A549 (cell line): ENCODE measurements at regions of chr10 and their contacts with region 1.

Region 1: DNA sequence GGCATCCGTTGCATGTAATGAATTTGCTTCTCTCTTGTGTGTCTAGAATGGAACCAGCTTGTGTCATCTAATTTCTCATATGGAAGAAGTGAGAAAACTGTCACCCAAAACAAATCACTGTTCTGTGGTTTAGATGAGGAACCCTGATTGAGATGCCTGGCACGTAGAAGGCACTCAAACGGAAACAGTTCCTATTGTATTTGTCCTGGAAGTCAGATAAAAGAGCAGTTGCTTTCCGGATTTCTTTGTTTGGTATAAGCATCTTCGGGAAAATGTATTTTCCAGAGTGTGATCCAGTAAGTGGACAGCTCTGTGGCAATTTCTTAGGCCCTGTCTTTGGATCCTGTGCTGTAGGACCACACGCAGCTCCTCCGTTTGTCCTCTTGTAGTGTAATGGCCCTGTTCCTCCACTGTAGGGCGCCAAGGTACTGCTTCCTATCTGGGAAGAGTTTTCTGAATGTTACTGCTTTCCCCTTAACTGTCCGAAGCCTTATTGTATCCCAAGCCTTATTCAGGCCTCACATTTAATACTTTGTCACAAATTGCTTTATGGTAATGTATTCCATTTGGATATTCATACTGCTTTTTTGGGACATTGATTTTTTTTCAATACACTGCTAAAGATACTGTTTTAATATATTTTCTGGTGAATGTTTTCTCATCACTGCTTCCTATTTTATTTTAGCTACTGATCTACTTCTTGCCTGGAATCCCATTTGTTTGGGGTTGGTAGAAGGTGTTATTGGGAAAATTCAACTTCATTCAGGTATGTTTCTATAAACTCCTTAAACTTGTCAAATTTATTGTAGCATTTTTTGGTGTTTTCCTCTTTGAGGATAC is 24.8 kb downstream of the INPP5F start:
- DNase-seq: peak; percentile 54 to 80
- ATAC-seq: peak; percentile 97 to 99
- H3K4me3 ChIP-seq: no peak overlapping the region
- H3K27ac ChIP-seq: no peak overlapping the region
- H3K4me1 ChIP-seq: peaks cover 8% of the 10 kb centered on the region
- CTCF ChIP-seq: peak; percentile 88
- EP300 ChIP-seq: no peak
- POLR2A ChIP-seq: no peak
- RAD21 ChIP-seq: peak; percentile 91 to 96

Region 2: GRCh38 chr10:119686439-119687191 is 64.0 kb before region 1 on chr10:
- CTCF ChIA-PET with region 1: interaction called, 18 read pairs
- POLR2A ChIA-PET with region 1: no interaction called
- DNase-seq: peak; percentile 81
- ATAC-seq: peak; percentile 82 to 90
- H3K4me3 ChIP-seq: no peak overlapping the region
- H3K27ac ChIP-seq: peak overlapping the region in 1 of 2 experiments; percentile 42; a peak in 1 of 6 replicates
- H3K4me1 ChIP-seq: peaks cover 13% of the 10 kb centered on the region
- CTCF ChIP-seq: peak; percentile 92
- EP300 ChIP-seq: no peak
- POLR2A ChIP-seq: no peak
- RAD21 ChIP-seq: peak; percentile 90 to 93

Region 3: GRCh38 chr10:119761106-119761505 is 10.5 kb after region 1 on chr10:
- CTCF ChIA-PET with region 1: interaction called, 27 read pairs
- POLR2A ChIA-PET with region 1: no interaction called
- DNase-seq: no peak
- ATAC-seq: peak in 1 of 2 experiments; percentile 29; a peak in 1 of 6 replicates
- H3K4me3 ChIP-seq: no peak overlapping the region
- H3K27ac ChIP-seq: no peak overlapping the region
- H3K4me1 ChIP-seq: peaks cover 9% of the 10 kb centered on the region
- CTCF ChIP-seq: no peak
- EP300 ChIP-seq: no peak
- POLR2A ChIP-seq: no peak
- RAD21 ChIP-seq: no peak

Region 4: GRCh38 chr10:119845656-119846055 is 95.0 kb after region 1 on chr10:
- CTCF ChIA-PET with region 1: interaction called, 16 read pairs
- POLR2A ChIA-PET with region 1: no interaction called
- DNase-seq: no peak
- ATAC-seq: no peak
- H3K4me3 ChIP-seq: no peak overlapping the region
- H3K27ac ChIP-seq: no peak overlapping the region
- H3K4me1 ChIP-seq: peaks cover 17% of the 10 kb centered on the region
- CTCF ChIP-seq: no peak
- EP300 ChIP-seq: no peak
- POLR2A ChIP-seq: no peak
- RAD21 ChIP-seq: no peak

Region 5: GRCh38 chr10:119872860-119873681 is 122.5 kb after region 1 on chr10:
- CTCF ChIA-PET with region 1: interaction called, 31 read pairs
- POLR2A ChIA-PET with region 1: interaction called, 3 read pairs
- DNase-seq: peak; percentile 49 to 86
- ATAC-seq: peak; percentile 90 to 97
- H3K4me3 ChIP-seq: peak overlapping the region; percentile 83
- H3K27ac ChIP-seq: peak overlapping the region; percentile 94 to 98
- H3K4me1 ChIP-seq: peaks cover 21% of the 10 kb centered on the region; the same call in 2 of the 3 replicates
- CTCF ChIP-seq: no peak
- EP300 ChIP-seq: no peak
- POLR2A ChIP-seq: peak; percentile 69
- RAD21 ChIP-seq: no peak

Region 6: DNA sequence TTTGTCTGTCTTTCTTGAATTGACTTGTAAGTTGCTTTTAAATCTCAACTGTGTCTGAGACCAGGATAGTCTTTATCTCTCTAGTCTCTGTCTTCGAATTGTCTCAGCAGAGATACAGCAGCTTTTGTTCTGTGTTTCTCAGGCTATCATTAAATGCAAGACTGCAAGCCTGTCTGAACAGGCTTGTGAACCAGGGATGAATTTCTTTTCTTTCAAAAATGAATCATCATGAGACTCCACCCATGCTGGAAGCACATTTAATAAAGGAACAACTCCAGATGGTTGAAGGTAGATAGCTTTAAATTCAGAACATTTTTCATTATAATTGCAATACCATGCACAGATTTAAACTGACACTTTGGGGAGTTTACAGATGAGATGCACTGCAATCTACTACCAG is 297.8 kb after region 1 on chr10:
- CTCF ChIA-PET with region 1: no interaction called
- POLR2A ChIA-PET with region 1: no interaction called
- DNase-seq: no peak
- ATAC-seq: 0 out of 6 replicates have a peak, but pooled peaks of 1 of the 2 experiments have one; percentile 13
- H3K4me3 ChIP-seq: no peak overlapping the region
- H3K27ac ChIP-seq: no peak overlapping the region
- H3K4me1 ChIP-seq: no peaks in the 10 kb centered on the region
- CTCF ChIP-seq: no peak
- EP300 ChIP-seq: no peak
- POLR2A ChIP-seq: no peak
- RAD21 ChIP-seq: no peak